Endothelial cell of umbilical vein (primary cell): ENCODE measurements at regions of chr14 and their contacts with region 1.

Region 1: GRCh38 chr14:37890095-37890494 is 294.7 kb downstream of the TTC6 start:
- DNase-seq: no peak
- H3K4me3 ChIP-seq: no peak overlapping the region
- H3K27ac ChIP-seq: no peak overlapping the region
- H3K4me1 ChIP-seq: no peaks in the 10 kb centered on the region
- H3K27me3 ChIP-seq: peaks cover 0 to 7% of the 10 kb centered on the region in 2 experiments
- CTCF ChIP-seq: peak in 1 of 2 donors; percentile 18
- POLR2A ChIP-seq: no peak

Region 2: GRCh38 chr14:35890308-35890707 is 1999.8 kb before region 1 on chr14:
- CTCF ChIA-PET with region 1: no interaction called
- POLR2A ChIA-PET with region 1: interaction called, 13 read pairs
- dilution Hi-C with region 1: no loop called
- intact Hi-C with region 1: no loop called
- DNase-seq: no peak
- H3K4me3 ChIP-seq: no peak overlapping the region
- H3K27ac ChIP-seq: no peak overlapping the region
- H3K4me1 ChIP-seq: no peaks in the 10 kb centered on the region
- H3K27me3 ChIP-seq: peaks cover 2 to 4% of the 10 kb centered on the region in 2 experiments
- CTCF ChIP-seq: no peak
- POLR2A ChIP-seq: no peak